ENCODE measurements at regions of chr6 and their contacts with region 1.

Region 1: GRCh38 chr6:44338228-44339122 is 4.0 kb upstream of the SPATS1 start:
- DNase-seq: peak; percentile 66
- ATAC-seq: peak; percentile 85
- H3K4me3 ChIP-seq: no peak overlapping the region
- H3K27ac ChIP-seq: no peak overlapping the region
- H3K4me1 ChIP-seq: peaks cover 6% of the 10 kb centered on the region; the same call in 1 of the 2 replicates
- H3K27me3 ChIP-seq: no peaks in the 10 kb centered on the region; the same call in none of the 2 replicates
- CTCF ChIP-seq: peak; percentile 87

Region 2: DNA sequence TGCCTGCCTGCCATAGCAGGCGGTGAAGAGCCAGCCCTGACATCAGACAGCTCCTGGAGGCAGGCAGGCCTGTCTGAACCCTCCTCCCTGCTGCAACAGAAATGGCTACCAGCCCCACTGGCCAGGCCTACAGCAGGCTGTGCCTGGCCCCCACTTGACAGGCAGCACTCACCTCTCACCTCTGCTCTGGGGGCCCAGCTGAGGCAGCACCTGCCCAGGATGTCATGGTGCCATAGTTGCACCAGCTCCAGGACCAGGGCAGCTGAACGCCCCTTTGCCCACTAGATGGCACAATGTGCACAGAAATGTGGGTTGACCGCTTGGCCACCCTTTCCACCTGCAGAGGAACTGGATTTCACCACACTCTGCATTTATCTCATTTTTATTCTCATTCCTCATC is 241.9 kb before region 1 on chr6:
- CTCF ChIA-PET with region 1: interaction called, 3 read pairs
- POLR2A ChIA-PET with region 1: no interaction called
- in situ Hi-C with region 1: no loop called
- intact Hi-C with region 1: loop called (anchors 5 kb)
- DNase-seq: no peak
- ATAC-seq: peak; percentile 86
- H3K4me3 ChIP-seq: no peak overlapping the region
- H3K27ac ChIP-seq: no peak overlapping the region
- H3K4me1 ChIP-seq: no peaks in the 10 kb centered on the region
- H3K27me3 ChIP-seq: no peaks in the 10 kb centered on the region
- CTCF ChIP-seq: peak; percentile 82

Region 3: DNA sequence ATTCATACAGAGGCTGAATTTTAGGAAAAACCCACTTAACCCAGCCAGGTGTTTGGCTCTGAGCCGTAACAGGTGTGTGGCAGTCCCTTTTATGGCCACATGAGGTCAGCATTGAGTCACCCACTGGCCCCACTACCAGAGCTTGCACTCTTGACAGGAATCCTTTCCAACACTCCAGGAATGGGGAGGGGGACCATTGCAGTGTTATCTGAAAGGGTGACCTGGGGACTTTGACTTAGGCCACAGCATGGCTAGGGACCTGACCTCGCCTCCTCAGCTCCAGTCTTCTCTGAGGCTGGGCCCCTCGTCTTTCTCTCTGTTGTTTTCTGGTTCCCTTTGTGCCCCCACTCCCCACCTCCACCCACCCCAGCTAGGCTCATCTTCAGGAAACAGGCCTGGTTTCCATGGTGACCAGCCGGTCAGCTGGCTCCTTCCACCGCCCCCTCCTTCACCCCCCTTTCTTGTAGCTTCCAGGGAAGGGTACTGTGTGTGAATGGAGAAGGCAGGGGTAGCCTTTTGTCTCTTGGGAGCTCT is 70.3 kb before region 1 on chr6:
- CTCF ChIA-PET with region 1: interaction called, 18 read pairs
- POLR2A ChIA-PET with region 1: no interaction called
- in situ Hi-C with region 1: no loop called
- intact Hi-C with region 1: loop called (anchors 1 kb)
- DNase-seq: no peak
- ATAC-seq: peak; percentile 34; the same call in 1 of the 2 replicates
- H3K4me3 ChIP-seq: no peak overlapping the region
- H3K27ac ChIP-seq: no peak overlapping the region
- H3K4me1 ChIP-seq: peaks cover 10% of the 10 kb centered on the region
- H3K27me3 ChIP-seq: peaks cover 16% of the 10 kb centered on the region
- CTCF ChIP-seq: peak; percentile 98

Region 4: DNA sequence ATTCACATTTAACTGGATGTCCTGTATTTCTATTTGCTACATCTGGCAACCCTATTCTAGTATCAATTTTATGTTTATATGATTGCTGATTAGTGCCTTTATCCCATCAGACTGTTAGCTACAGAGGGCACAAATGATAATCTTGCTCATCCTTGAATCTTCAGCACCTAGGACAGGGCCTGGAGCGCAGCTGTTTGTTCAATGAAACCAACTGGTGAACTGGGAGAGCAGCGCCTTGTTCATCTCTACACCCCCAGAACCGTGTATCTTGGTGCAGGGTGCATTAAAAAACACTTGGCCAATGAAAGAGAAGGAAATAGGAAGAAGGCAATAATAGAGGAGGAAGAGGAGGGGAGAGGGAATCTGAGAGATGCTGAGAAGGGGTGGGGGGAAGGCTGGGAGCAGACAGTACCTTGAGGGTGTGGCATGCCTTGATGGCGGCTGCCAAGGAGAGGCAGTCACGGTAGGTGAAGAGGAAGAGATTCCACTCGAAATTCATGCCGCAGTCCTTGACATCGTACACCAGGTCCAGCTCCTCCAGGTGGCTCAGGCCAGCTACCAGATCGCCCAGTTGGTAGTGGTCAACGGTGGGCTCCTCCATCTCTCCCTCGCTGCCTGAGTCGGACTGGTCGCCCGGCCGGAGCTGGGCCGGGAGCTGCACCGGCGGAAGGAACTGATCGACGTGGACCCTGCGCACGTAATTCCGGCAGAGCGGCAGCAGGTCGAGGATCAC is 52.8 kb before region 1 on chr6:
- CTCF ChIA-PET with region 1: interaction called, 3 read pairs
- POLR2A ChIA-PET with region 1: no interaction called
- in situ Hi-C with region 1: no loop called
- intact Hi-C with region 1: loop called (anchors 5 kb)
- DNase-seq: no peak
- ATAC-seq: no peak
- H3K4me3 ChIP-seq: no peak overlapping the region
- H3K27ac ChIP-seq: no peak overlapping the region
- H3K4me1 ChIP-seq: no peaks in the 10 kb centered on the region
- H3K27me3 ChIP-seq: peaks cover 23% of the 10 kb centered on the region; the same call in 1 of the 2 replicates
- CTCF ChIP-seq: no peak

Region 5: DNA sequence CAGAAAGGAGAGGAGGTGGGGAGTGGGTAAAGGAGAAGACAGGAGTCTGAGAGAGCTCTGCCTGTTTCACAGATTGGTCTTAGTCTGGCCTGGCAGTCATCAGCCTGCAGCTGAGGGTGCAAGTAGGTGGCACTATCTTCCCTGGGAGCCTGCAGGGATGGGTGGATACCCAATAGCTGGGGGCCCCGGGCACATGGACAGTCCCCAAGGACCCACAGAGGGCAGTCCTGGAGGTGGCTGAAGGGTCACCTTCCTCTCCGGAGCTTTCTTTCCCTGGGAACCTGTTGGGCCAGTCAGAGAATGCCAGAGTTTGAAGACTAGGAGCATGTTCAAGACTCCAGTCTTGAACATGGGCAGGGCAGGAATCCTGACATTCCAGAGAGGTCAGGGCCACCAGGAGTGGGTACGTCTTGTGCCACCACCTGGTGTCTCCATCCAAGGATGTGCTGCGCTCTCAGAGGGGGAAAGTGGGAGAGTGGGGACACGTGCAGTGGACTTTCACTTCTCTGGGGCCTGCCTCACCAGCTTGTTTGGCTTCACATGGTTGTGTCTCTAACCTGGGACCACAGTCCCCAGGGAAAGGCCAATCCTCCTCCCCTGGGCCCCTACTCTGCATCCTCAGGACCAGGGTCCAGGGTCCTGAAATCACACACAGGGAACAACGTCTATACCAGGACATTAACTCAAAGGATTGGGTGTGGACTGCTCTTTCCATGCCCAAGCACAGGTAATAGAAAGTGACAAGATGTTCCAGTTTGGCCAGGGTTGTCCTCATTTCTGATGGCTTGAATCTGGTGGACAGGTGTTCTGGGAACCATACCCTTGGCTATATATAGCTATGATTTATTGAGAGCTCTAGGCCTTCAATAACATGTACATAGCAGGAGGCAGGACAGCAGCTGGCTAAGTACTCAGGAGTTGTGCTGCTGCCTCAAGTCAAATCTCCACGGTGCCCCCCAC is 43.4 kb before region 1 on chr6:
- CTCF ChIA-PET with region 1: no interaction called
- POLR2A ChIA-PET with region 1: interaction called, 11 read pairs
- in situ Hi-C with region 1: no loop called
- intact Hi-C with region 1: no loop called
- DNase-seq: no peak
- ATAC-seq: no peak
- H3K4me3 ChIP-seq: no peak overlapping the region
- H3K27ac ChIP-seq: no peak overlapping the region
- H3K4me1 ChIP-seq: peaks cover 8% of the 10 kb centered on the region; the same call in 1 of the 2 replicates
- H3K27me3 ChIP-seq: peaks cover 15% of the 10 kb centered on the region
- CTCF ChIP-seq: no peak

Measured in Panc1 (cell line).